ENCODE measurements at regions of chr18 and their contacts with region 1.

Region 1: GRCh38 chr18:68840554-68841263 is 42.8 kb downstream of the CCDC102B start:
- DNase-seq: peak; percentile 92
- H3K4me3 ChIP-seq: no peak overlapping the region
- H3K27ac ChIP-seq: peak overlapping the region; percentile 78
- H3K4me1 ChIP-seq: peaks cover 63% of the 10 kb centered on the region
- H3K27me3 ChIP-seq: no peaks in the 10 kb centered on the region
- CTCF ChIP-seq: no peak

Region 2: DNA sequence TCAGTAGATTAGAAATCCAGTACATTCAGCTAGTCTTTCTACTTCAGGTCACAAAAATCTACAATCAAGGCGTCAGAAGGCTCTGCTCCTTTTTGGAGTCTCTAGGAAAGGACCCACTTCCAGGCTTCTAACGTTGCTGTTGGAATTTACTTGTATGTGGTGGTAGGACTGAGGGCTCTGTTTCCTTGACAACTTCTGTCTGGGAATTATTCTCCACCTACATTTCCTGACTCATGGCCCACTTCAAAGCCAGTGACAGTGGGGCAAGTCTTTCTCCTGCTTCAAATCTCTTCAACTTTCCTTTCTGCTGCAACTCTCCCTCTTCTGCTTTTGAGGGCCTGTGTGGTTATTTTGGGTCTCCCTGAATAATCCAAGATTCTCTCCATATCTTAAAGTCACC is 115.4 kb before region 1 on chr18:
- CTCF ChIA-PET with region 1: no interaction called
- POLR2A ChIA-PET with region 1: no interaction called
- intact Hi-C with region 1: no loop called
- DNase-seq: no peak
- H3K4me3 ChIP-seq: no peak overlapping the region
- H3K27ac ChIP-seq: no peak overlapping the region
- H3K4me1 ChIP-seq: peaks cover 11% of the 10 kb centered on the region
- H3K27me3 ChIP-seq: no peaks in the 10 kb centered on the region
- CTCF ChIP-seq: no peak

Region 3: DNA sequence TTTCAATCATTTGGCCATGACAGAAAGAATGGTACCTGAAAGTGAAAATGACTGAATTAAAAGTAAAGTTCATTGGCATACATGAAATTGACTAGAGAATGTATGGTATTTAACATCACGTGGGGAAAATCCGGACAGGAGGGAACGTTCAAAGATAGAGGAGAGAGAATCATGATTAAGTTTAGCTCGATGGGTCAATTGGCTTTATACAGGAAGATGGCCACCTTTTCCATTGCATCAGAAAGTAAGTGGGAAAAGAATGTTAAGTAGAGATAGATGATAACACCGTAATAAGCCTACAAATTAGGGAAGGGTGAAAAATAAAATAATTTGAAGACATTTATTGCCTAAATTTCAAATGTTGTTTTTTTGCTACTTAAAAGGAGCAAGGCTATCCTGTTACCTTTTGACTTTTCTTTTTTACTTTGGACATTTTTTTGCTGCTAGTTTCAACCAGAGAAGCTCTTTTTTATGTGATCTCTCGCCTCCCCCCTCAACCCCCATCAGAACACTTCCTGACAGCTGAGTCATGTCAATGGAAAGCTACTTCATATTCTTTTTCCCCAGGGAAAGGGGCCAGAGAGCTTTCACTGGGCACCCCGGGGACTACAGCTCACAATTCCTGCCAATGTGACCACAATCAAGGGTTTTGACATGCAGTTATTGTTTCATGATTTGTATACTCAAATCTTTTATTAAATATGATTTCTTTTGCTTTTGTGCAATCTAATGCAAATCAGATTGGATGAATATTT is 43.6 kb before region 1 on chr18:
- CTCF ChIA-PET with region 1: no interaction called
- POLR2A ChIA-PET with region 1: no interaction called
- intact Hi-C with region 1: loop called (anchors 5 kb)
- DNase-seq: peak; percentile 93
- H3K4me3 ChIP-seq: peak overlapping the region; percentile 29
- H3K27ac ChIP-seq: peak overlapping the region; percentile 49
- H3K4me1 ChIP-seq: peaks cover 22% of the 10 kb centered on the region
- H3K27me3 ChIP-seq: no peaks in the 10 kb centered on the region
- CTCF ChIP-seq: no peak

Region 4: GRCh38 chr18:68893396-68893795 is 52.7 kb after region 1 on chr18:
- CTCF ChIA-PET with region 1: no interaction called
- POLR2A ChIA-PET with region 1: no interaction called
- intact Hi-C with region 1: no loop called
- DNase-seq: no peak
- H3K4me3 ChIP-seq: no peak overlapping the region
- H3K27ac ChIP-seq: no peak overlapping the region
- H3K4me1 ChIP-seq: no peaks in the 10 kb centered on the region
- H3K27me3 ChIP-seq: no peaks in the 10 kb centered on the region
- CTCF ChIP-seq: no peak

Measured in A673 (cell line).